ENCODE measurements at regions of chr19 and their contacts with region 1.

Region 1: GRCh38 chr19:41837981-41838708 is 6.3 kb downstream of the LYPD4 start:
- DNase-seq: no peak
- H3K4me3 ChIP-seq: no peak overlapping the region
- H3K27ac ChIP-seq: no peak overlapping the region
- H3K4me1 ChIP-seq: no peaks in the 10 kb centered on the region
- H3K27me3 ChIP-seq: peaks cover 20% of the 10 kb centered on the region; the same call in 1 of the 2 replicates
- CTCF ChIP-seq: no peak

Region 2: DNA sequence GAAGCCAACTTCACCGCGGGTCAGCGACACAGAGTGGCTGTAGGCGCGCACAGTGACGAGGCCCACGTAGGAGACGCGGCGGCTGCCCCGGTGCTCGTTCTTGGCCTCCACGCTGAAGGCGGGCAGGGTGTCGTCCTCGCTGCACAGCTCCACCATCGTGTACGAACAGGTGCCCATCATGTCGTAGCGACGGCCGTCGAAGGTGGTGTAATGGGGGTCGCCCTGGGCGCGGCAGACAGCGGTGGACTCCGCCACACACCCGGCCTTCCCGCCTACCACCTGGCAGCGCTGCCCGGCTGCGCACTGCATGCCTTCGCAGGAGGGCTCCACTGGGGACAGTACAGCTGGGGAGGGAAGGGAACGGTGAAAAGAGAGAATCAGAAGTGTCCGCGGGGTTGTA is 1913.8 kb before region 1 on chr19:
- CTCF ChIA-PET with region 1: interaction called, 14 read pairs
- POLR2A ChIA-PET with region 1: no interaction called
- intact Hi-C with region 1: no loop called
- DNase-seq: no peak
- H3K4me3 ChIP-seq: no peak overlapping the region
- H3K27ac ChIP-seq: no peak overlapping the region
- H3K4me1 ChIP-seq: peaks cover 9% of the 10 kb centered on the region; the same call in 1 of the 2 replicates
- H3K27me3 ChIP-seq: no peaks in the 10 kb centered on the region
- CTCF ChIP-seq: no peak

Region 3: DNA sequence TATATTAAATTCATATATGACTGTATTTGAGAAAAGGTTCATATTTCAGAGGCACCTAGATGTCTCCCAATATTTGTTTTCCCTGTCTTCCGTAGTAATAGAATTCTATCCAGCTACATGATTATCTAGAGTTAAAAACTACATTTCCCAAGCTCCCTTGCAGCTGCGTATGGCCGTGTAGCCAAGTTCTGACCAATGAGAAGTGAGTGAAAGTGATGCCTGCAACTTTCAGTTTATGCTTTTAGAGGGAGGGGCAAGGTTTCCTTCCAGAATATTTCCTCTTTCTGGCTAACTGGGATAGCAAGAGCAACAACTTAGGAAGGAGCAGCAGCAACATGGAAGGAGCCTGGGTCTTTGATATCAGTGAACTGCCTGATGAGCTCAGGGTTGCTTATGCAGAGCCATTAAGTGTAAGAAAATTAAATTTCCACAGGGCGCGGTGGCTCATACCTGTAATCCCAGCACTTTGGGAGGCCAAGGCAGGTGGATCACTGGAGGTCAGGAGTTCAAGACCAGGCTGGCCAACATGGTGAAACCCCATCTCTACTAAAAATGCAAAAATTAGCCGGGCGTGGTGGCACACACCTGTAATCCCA is 773.1 kb before region 1 on chr19:
- CTCF ChIA-PET with region 1: interaction called, 11 read pairs
- POLR2A ChIA-PET with region 1: no interaction called
- intact Hi-C with region 1: no loop called
- DNase-seq: peak in 1 of 2 experiments; percentile 34
- H3K4me3 ChIP-seq: no peak overlapping the region
- H3K27ac ChIP-seq: no peak overlapping the region
- H3K4me1 ChIP-seq: no peaks in the 10 kb centered on the region
- H3K27me3 ChIP-seq: no peaks in the 10 kb centered on the region
- CTCF ChIP-seq: no peak

Region 4: GRCh38 chr19:42261763-42262162 is 423.6 kb after region 1 on chr19:
- CTCF ChIA-PET with region 1: no interaction called
- POLR2A ChIA-PET with region 1: no interaction called
- intact Hi-C with region 1: no loop called
- DNase-seq: no peak
- H3K4me3 ChIP-seq: no peak overlapping the region
- H3K27ac ChIP-seq: no peak overlapping the region
- H3K4me1 ChIP-seq: peaks cover 6% of the 10 kb centered on the region; the same call in 1 of the 2 replicates
- H3K27me3 ChIP-seq: no peaks in the 10 kb centered on the region
- CTCF ChIP-seq: no peak